ENCODE measurements at regions of chr15 and their contacts with region 1.

Region 1: GRCh38 chr15:41774062-41774881 is at the start of gene MAPKBP1:
- DNase-seq: peak; percentile 97 to 99 (median 98)
- H3K4me3 ChIP-seq: peak within 1 kb of the TSS; percentile 89
- H3K4me3 Mint-ChIP-seq: peak within 1 kb of the TSS; percentile 91 to 98 (median 95)
- H3K27ac ChIP-seq: peak within 1 kb of the TSS; percentile 68
- H3K27ac Mint-ChIP-seq: peak within 1 kb of the TSS; percentile 93 to 98 (median 96)
- H3K4me1 ChIP-seq: peaks cover 46% of the 10 kb centered on the region
- H3K4me1 Mint-ChIP-seq: peaks cover 53 to 64% (median 64%) of the 10 kb centered on the region in 3 donors
- H3K27me3 ChIP-seq: no peaks in the 10 kb centered on the region
- H3K27me3 Mint-ChIP-seq: no peaks in the 10 kb centered on the region
- total RNA-seq, gene MAPKBP1: 16.0 to 17.8 TPM

Region 2: GRCh38 chr15:41811432-41812195 is 37.3 kb after region 1 on chr15:
- CTCF ChIA-PET with region 1: interaction called, 167 read pairs
- POLR2A ChIA-PET with region 1: interaction called, 3 read pairs
- DNase-seq: peak; percentile 64 to 82 (median 65)
- H3K4me3 ChIP-seq: no peak overlapping the region
- H3K4me3 Mint-ChIP-seq: no peak overlapping the region
- H3K27ac ChIP-seq: no peak overlapping the region
- H3K27ac Mint-ChIP-seq: peak overlapping the region in 5 of 8 donors; percentile 12 to 65 (median 35)
- H3K4me1 ChIP-seq: peaks cover 7% of the 10 kb centered on the region
- H3K4me1 Mint-ChIP-seq: peaks cover 10 to 14% (median 12%) of the 10 kb centered on the region in 3 donors
- H3K27me3 ChIP-seq: no peaks in the 10 kb centered on the region
- H3K27me3 Mint-ChIP-seq: no peaks in the 10 kb centered on the region

Region 3: DNA sequence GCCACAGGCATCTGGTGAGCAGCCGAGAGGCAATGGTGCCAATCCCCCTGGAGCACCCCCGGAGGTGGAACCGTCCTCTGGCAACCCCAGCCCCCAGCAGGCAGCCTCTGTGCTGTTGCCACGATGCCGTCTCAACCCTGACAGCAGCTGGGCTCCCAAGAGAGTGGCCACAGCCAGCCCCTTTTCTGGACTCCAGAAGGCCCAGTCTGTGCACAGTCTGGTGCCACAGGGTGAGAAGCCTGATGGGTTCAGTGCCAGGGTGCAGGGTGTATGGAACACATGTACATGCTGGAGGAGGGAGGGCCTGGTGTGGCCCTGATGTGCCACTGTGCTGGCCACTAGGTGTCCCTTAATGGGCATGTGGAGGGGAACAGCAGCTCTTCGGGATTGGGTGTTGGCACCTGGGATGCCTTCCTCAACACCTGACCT is 48.7 kb after region 1 on chr15:
- CTCF ChIA-PET with region 1: interaction called, 11 read pairs
- POLR2A ChIA-PET with region 1: interaction called, 7 read pairs
- DNase-seq: no peak
- H3K4me3 ChIP-seq: no peak overlapping the region
- H3K4me3 Mint-ChIP-seq: no peak overlapping the region
- H3K27ac ChIP-seq: no peak overlapping the region
- H3K27ac Mint-ChIP-seq: no peak overlapping the region
- H3K4me1 ChIP-seq: no peaks in the 10 kb centered on the region
- H3K4me1 Mint-ChIP-seq: peaks cover 0 to 8% (median 6%) of the 10 kb centered on the region in 3 donors
- H3K27me3 ChIP-seq: no peaks in the 10 kb centered on the region
- H3K27me3 Mint-ChIP-seq: no peaks in the 10 kb centered on the region

Region 4: DNA sequence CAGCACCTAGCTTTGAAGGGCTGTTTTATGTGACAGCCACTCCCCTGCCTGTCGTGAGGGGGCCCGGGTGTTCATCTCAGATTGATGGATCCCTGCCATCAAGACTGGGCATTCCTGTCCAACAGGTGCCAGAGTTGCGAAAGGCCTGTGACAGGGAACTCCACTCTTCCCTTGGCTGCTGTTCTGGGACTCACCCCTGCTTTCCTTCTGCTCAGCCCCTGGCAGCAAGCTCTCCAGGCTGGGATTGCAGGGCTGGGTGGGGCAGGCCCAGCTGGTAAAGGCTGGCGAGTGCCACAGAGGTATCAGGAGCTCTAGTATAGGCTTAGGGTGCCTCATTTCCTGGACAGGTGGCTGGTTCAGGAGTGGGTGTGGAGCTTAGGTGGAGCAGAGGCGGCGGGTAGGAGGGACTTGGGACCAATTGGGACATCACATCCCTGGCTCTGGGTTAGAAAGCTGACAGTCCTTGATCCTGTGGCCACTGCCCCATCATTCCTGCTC is 64.2 kb after region 1 on chr15 and contains the start of gene PLA2G4B:
- CTCF ChIA-PET with region 1: no interaction called
- POLR2A ChIA-PET with region 1: no interaction called
- DNase-seq: no peak
- H3K4me3 ChIP-seq: no peak within 1 kb of the TSS
- H3K4me3 Mint-ChIP-seq: no peak within 1 kb of the TSS
- H3K27ac ChIP-seq: no peak within 1 kb of the TSS
- H3K27ac Mint-ChIP-seq: peak within 1 kb of the TSS in 1 of 8 donors; percentile 84
- H3K4me1 ChIP-seq: peaks cover 5% of the 10 kb centered on the region
- H3K4me1 Mint-ChIP-seq: peaks cover 7 to 24% (median 18%) of the 10 kb centered on the region in 3 donors
- H3K27me3 ChIP-seq: no peaks in the 10 kb centered on the region
- H3K27me3 Mint-ChIP-seq: no peaks in the 10 kb centered on the region
- total RNA-seq, gene PLA2G4B: 5.9 to 6.8 TPM

Region 5: GRCh38 chr15:41904541-41905005 is 130.3 kb after region 1 on chr15:
- CTCF ChIA-PET with region 1: interaction called, 154 read pairs
- POLR2A ChIA-PET with region 1: interaction called, 4 read pairs
- DNase-seq: peak; percentile 58 to 81 (median 65)
- H3K4me3 ChIP-seq: no peak overlapping the region
- H3K4me3 Mint-ChIP-seq: no peak overlapping the region
- H3K27ac ChIP-seq: no peak overlapping the region
- H3K27ac Mint-ChIP-seq: peak overlapping the region in 7 of 8 donors; percentile 56 to 97 (median 85)
- H3K4me1 ChIP-seq: no peaks in the 10 kb centered on the region
- H3K4me1 Mint-ChIP-seq: peaks cover 7 to 9% (median 8%) of the 10 kb centered on the region in 3 donors
- H3K27me3 ChIP-seq: no peaks in the 10 kb centered on the region
- H3K27me3 Mint-ChIP-seq: no peaks in the 10 kb centered on the region